ENCODE measurements at regions of chr10 and their contacts with region 1.

Region 1: DNA sequence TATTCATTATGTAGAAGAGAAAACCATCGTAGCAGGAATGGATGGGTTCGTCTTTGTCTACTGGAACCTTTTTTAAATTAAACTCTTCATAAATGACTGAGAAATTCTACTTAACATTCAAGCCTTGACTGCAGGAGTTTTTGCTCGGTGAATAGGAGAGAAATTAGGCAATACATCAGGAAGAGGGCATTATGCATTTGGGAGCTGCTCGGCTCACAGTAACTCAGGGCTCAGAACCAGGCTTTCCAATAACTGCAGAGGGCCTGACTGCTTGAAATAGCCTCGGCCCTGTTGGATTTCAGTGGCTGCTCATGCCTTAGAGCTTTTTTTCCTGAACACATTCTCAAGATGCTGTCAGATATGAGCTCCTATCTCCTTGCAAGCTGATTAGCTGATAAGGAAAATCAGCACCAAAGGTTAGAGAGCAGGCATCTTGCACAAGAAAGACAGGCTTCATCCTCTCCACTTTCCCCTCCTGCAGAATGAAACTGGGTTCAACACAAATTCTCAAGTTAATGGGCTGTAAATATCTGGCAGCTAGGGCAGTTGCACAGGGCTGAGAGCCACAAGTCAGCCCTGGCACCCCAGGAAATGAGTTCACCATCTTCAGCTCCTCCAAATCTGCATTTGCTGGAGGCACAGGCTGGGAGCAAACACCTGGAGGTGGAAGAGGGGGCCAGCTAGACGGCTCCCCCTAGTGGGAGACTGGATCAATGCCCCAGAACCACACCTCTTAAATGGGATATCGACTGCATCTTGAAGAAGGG is 24.3 kb downstream of the TECTB start:
- DNase-seq: peak; percentile 66
- H3K4me3 ChIP-seq: no peak overlapping the region
- H3K27ac ChIP-seq: no peak overlapping the region
- H3K4me1 ChIP-seq: peaks cover 0 to 5% of the 10 kb centered on the region in 2 experiments; a peak in 1 of 4 replicates
- H3K27me3 ChIP-seq: 0 out of 2 replicates have a peak, but pooled peaks cover 5% of the 10 kb centered on the region
- CTCF ChIP-seq: peak; percentile 58
- EP300 ChIP-seq: no peak
- RAD21 ChIP-seq: peak; percentile 79

Region 2: GRCh38 chr10:112173206-112173605 is 134.3 kb before region 1 on chr10:
- CTCF ChIA-PET with region 1: interaction called, 10 read pairs
- POLR2A ChIA-PET with region 1: no interaction called
- DNase-seq: no peak
- H3K4me3 ChIP-seq: no peak overlapping the region
- H3K27ac ChIP-seq: no peak overlapping the region
- H3K4me1 ChIP-seq: no peaks in the 10 kb centered on the region
- H3K27me3 ChIP-seq: no peaks in the 10 kb centered on the region
- CTCF ChIP-seq: no peak
- EP300 ChIP-seq: no peak
- RAD21 ChIP-seq: no peak

Region 3: GRCh38 chr10:112183329-112184051 is 124.1 kb before region 1 on chr10 and contains the start of gene GPAM:
- CTCF ChIA-PET with region 1: interaction called, 35 read pairs
- POLR2A ChIA-PET with region 1: interaction called, 4 read pairs
- DNase-seq: peak; percentile 94
- H3K4me3 ChIP-seq: peak within 1 kb of the TSS; percentile 85 to 98
- H3K27ac ChIP-seq: peak within 1 kb of the TSS; percentile 53 to 90; a peak in 3 of 4 replicates
- H3K4me1 ChIP-seq: peaks cover 4 to 7% of the 10 kb centered on the region in 2 experiments; a peak in 2 of 4 replicates
- H3K27me3 ChIP-seq: no peaks in the 10 kb centered on the region
- CTCF ChIP-seq: no peak
- EP300 ChIP-seq: peak in 1 of 2 experiments; percentile 30; a peak in 1 of 4 replicates
- RAD21 ChIP-seq: no peak; the same call in none of the 2 replicates
- polyA plus RNA-seq, gene GPAM: 2.1 and 3.9 TPM in 2 replicates

Region 4: DNA sequence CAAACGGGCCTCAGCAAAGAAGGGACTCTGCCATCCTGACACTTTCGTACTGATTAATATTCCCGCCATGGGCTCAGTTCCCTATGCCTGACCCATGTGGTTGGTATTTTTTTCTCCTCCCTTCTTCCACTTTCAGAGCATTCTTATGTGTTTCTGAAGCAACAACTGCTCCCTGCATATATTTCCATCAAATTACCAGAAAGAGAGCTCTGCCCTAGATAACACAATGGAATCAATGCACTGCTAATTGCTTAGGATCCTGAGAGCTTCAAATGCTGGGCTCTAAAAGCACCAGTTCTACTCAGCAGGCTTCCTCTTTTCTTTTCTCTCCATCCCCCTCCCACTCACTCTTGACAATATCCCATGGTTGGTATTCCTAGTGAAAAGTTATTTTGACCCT is 19.1 kb before region 1 on chr10:
- CTCF ChIA-PET with region 1: interaction called, 27 read pairs
- POLR2A ChIA-PET with region 1: no interaction called
- DNase-seq: no peak
- H3K4me3 ChIP-seq: no peak overlapping the region
- H3K27ac ChIP-seq: no peak overlapping the region
- H3K4me1 ChIP-seq: no peaks in the 10 kb centered on the region; a peak in 1 of 4 replicates
- H3K27me3 ChIP-seq: no peaks in the 10 kb centered on the region
- CTCF ChIP-seq: no peak
- EP300 ChIP-seq: no peak
- RAD21 ChIP-seq: no peak

Region 5: GRCh38 chr10:112295853-112296830 is 11.4 kb before region 1 on chr10:
- CTCF ChIA-PET with region 1: interaction called, 27 read pairs
- POLR2A ChIA-PET with region 1: no interaction called
- DNase-seq: peak; percentile 29
- H3K4me3 ChIP-seq: no peak overlapping the region
- H3K27ac ChIP-seq: peak overlapping the region in 1 of 2 experiments; percentile 24; a peak in 2 of 4 replicates
- H3K4me1 ChIP-seq: peaks cover 0 to 29% of the 10 kb centered on the region in 2 experiments; a peak in 2 of 4 replicates
- H3K27me3 ChIP-seq: no peaks in the 10 kb centered on the region
- CTCF ChIP-seq: no peak
- EP300 ChIP-seq: no peak
- RAD21 ChIP-seq: no peak

Measured in SK-N-SH (cell line).